ENCODE measurements at regions of chr12 and their contacts with region 1.

Region 1: GRCh38 chr12:54251667-54252284 is 28.1 kb downstream of the CBX5 start:
- DNase-seq: no peak
- ATAC-seq: peak in 2 of 8 donors; percentile 38 to 41
- H3K4me3 ChIP-seq: no peak overlapping the region
- H3K27ac ChIP-seq: no peak overlapping the region
- H3K4me1 ChIP-seq: peaks cover 0 to 25% (median 12%) of the 10 kb centered on the region in 9 donors
- H3K27me3 ChIP-seq: no peaks in the 10 kb centered on the region
- CTCF ChIP-seq: peak in 8 of 9 donors; percentile 47 to 76 (median 71)

Region 2: DNA sequence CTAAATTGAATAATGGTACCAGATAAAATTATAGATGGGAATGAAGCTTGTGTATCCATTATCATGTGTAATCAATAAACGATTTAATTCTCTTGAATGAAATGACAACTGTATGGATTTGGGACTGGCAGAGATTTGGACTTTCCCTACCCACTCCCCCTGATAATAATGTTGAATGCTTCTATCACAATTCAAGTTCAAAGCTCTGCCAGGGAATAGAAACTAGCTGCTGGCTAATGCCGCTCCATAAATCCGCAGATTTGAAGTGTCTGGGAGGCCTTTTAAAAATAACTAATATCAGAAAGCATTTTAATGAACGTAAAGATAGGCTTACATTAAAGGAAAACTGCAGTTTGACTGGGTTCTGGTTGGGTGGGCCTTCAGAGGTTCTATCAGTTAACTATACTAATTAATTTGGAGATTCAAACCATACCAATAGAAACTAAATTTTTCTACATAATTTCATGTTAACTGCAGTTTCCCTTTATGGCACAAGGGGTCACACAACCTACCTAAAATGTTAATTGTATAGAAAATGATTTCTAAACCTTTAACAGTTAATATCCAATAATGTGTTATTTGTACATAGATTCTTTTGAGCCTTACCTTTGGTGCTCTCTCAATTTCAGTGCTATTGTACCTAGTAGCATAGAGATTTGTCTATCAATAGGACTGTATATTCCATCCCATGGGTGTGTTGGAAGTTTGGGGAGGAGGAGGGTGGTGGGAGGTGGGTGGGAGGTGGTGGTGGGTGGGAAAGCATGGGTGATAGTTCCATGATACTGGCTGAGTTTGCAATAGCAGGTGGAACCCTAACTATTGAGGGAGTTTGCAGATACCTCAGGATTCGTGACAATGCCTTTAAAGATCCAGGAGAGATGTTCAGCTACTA is 33.6 kb after region 1 on chr12:
- intact Hi-C with region 1: loop called in 1 of 10 experiments (anchors 5 kb)
- DNase-seq: no peak
- ATAC-seq: no peak
- H3K4me3 ChIP-seq: peak overlapping the region in 2 of 10 donors; percentile 5 to 14
- H3K27ac ChIP-seq: peak overlapping the region in 2 of 10 donors; percentile 11 to 37
- H3K4me1 ChIP-seq: peaks cover 18 to 79% (median 59%) of the 10 kb centered on the region in 9 donors
- H3K27me3 ChIP-seq: no peaks in the 10 kb centered on the region
- CTCF ChIP-seq: peak in 7 of 9 donors; percentile 10 to 35 (median 21)

Region 3: DNA sequence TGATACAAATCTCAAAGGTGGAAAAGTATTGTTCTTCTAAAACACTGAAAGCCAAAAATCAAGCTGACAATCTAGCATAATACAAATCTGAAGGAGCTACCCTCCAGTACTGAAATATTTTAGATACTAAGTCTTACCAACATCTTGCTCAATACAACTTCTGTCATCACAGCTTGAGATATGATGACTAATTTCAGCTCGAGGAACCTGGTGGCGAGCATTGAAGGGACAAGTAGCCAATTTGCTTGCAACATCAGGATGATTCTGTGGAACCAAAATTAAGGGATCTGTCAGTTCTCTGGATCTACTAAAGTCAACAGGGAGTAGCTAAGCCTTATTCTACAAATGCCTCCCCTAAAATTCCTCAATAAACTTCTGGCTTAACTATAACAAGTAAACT is 211.3 kb after region 1 on chr12:
- intact Hi-C with region 1: no loop called
- DNase-seq: no peak
- ATAC-seq: peak in 1 of 8 donors; percentile 77
- H3K4me3 ChIP-seq: no peak overlapping the region
- H3K27ac ChIP-seq: no peak overlapping the region
- H3K4me1 ChIP-seq: peaks cover 0 to 9% (median 0%) of the 10 kb centered on the region in 9 donors
- H3K27me3 ChIP-seq: peaks cover 0 to 42% (median 11%) of the 10 kb centered on the region in 7 donors
- CTCF ChIP-seq: no peak

Measured in heart right ventricle (tissue), 16 donors.